HepG2 (cell line): ENCODE measurements at regions of chr3 and their contacts with region 1.

Region 1: DNA sequence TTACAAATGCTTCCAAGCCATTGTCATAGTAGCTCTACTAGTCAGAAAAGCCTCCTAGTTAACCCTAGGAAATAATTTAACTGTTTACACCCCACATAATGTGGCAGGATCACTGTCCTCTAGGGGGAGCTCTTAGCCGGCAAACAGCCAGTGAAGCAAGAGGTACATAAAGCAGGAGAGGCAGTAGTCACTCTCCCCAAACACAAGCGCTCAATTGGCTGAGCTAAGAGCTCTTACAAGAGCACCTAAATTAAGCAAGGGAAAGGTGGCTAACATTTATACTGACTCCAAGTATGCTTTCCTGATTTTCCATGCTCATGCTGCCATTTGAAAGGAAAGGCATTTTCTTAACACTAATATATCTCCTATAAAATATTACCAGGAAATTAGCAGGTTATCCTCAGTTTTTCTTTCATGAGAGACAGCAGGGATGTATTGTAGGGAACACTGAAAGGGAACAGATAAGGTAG is 37.6 kb downstream of the NCEH1 start:
- DNase-seq: peak; percentile 68
- ATAC-seq: peak; percentile 90
- H3K4me3 ChIP-seq: no peak overlapping the region
- H3K27ac ChIP-seq: no peak overlapping the region
- H3K4me1 ChIP-seq: peaks cover 5% of the 10 kb centered on the region; the same call in 1 of the 2 replicates
- H3K27me3 ChIP-seq: no peaks in the 10 kb centered on the region
- CTCF ChIP-seq: peak; percentile 83
- EP300 ChIP-seq: no peak
- POLR2A ChIP-seq: no peak
- RAD21 ChIP-seq: peak; percentile 80

Region 2: GRCh38 chr3:172289582-172289981 is 383.7 kb before region 1 on chr3:
- CTCF ChIA-PET with region 1: no interaction called
- POLR2A ChIA-PET with region 1: no interaction called
- in situ Hi-C with region 1: no loop called
- intact Hi-C with region 1: no loop called
- DNase-seq: no peak
- ATAC-seq: peak; percentile 68
- H3K4me3 ChIP-seq: no peak overlapping the region
- H3K27ac ChIP-seq: no peak overlapping the region
- H3K4me1 ChIP-seq: peaks cover 15% of the 10 kb centered on the region
- H3K27me3 ChIP-seq: no peaks in the 10 kb centered on the region
- CTCF ChIP-seq: peak; percentile 50
- EP300 ChIP-seq: no peak
- POLR2A ChIP-seq: peak in 1 of 2 experiments; percentile 46; a peak in 1 of 4 replicates
- RAD21 ChIP-seq: no peak

Region 3: GRCh38 chr3:172750368-172751174 is 77.3 kb after region 1 on chr3 and contains the start of gene ECT2:
- CTCF ChIA-PET with region 1: interaction called, 4 read pairs
- POLR2A ChIA-PET with region 1: no interaction called
- in situ Hi-C with region 1: no loop called
- intact Hi-C with region 1: loop called (anchors 1 kb)
- DNase-seq: peak; percentile 99
- ATAC-seq: peak; percentile 99
- H3K4me3 ChIP-seq: peak within 1 kb of the TSS; percentile 87 to 96 (median 94)
- H3K27ac ChIP-seq: peak within 1 kb of the TSS; percentile 83
- H3K4me1 ChIP-seq: peaks cover 70% of the 10 kb centered on the region
- H3K27me3 ChIP-seq: no peaks in the 10 kb centered on the region; a peak in 1 of 5 replicates
- CTCF ChIP-seq: peak; percentile 86
- EP300 ChIP-seq: peak; percentile 43 to 81; a peak in 3 of 4 replicates
- POLR2A ChIP-seq: peak; percentile 54 to 74
- RAD21 ChIP-seq: peak; percentile 22; the same call in 1 of the 2 replicates
- total RNA-seq, gene ECT2: 52.0 and 84.4 TPM in 2 replicates